Brain microvascular endothelial cell (primary cell): ENCODE measurements at regions of chr12 and their contacts with region 1.

Region 1: DNA sequence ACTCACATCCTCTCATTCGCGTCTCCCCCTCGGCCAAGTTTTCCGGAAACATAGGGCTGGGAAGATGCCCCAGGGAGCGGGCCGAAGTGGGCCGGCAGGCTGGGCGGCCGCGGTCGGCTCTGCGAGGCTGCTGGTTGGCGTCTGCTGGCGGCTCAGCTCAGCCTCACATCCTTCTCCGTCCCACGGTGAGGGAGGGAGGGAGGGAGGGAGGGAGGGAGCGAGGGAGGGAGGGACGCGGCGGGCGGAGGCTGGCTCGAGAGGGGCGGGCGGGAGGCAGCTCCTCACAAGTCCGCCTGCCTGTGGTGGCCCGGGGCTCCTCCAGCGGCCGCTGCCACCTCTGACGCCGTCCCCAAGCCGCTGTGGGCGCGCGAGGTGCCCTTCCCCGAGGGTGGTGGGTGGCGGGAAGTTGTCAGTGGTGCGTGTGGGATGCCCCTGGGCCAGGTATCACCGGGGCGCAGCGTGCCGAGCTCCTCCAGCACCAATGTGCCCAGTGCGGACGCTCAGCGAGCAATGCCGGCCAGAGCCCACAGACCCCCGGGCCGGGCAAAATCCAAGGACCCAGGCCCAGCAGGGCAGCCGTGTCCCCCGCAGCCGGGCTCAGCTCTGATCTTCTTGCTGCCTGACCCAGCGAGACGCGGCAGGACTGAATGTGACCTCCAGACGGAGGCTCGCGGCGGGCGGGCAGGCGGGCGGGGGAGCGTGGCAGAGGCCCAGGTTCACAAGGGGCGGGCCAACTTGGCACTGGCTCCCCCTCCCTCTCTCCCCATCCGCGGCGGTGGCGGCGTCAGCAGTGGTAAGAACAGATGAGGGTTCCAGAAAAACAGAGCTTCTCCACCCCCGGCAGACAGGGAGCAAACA is 94.0 kb downstream of the RFLNA start:
- DNase-seq: peak; percentile 76
- H3K4me3 ChIP-seq: peak overlapping the region; percentile 95
- H3K27ac ChIP-seq: peak overlapping the region; percentile 86
- H3K27me3 ChIP-seq: no peaks in the 10 kb centered on the region
- CTCF ChIP-seq: no peak

Region 2: GRCh38 chr12:123787466-123787865 is 601.4 kb before region 1 on chr12:
- in situ Hi-C with region 1: no loop called
- DNase-seq: no peak
- H3K4me3 ChIP-seq: no peak overlapping the region
- H3K27ac ChIP-seq: no peak overlapping the region
- H3K27me3 ChIP-seq: no peaks in the 10 kb centered on the region
- CTCF ChIP-seq: no peak

Region 3: DNA sequence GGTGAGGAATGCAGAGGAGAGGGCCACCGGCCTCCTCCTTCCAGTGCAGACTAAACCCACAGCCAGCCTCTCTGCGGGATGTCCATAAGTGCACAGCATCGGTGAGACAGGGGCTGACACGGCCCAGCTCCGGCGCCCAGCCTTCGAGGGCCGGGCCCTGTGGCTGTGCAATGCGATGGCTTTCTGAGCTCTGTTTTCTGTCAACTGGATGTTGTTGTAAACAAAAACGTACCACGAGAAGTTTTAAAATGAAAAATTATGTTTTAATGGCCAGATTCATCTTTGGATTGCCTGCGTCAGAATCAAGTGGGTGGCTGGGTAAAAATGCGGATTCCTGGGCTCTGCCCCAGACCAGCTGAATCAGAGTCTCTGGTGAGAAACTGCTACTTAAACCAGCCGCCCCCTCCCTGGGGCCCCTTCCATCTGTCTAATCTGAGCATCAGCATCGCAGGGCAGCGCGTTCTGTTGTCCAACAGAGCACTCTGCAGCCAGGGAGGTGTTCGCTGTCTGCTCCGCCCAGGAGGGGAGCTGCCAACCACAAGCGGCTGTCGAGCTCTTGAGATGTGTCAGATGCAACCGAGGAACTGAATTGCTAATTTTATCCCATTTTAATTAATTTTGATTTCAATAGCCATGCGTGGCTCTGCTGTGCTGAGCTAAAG is 39.4 kb after region 1 on chr12:
- in situ Hi-C with region 1: no loop called
- DNase-seq: peak; percentile 66
- H3K4me3 ChIP-seq: no peak overlapping the region
- H3K27ac ChIP-seq: peak overlapping the region; percentile 28
- H3K27me3 ChIP-seq: no peaks in the 10 kb centered on the region
- CTCF ChIP-seq: peak; percentile 6

Region 4: DNA sequence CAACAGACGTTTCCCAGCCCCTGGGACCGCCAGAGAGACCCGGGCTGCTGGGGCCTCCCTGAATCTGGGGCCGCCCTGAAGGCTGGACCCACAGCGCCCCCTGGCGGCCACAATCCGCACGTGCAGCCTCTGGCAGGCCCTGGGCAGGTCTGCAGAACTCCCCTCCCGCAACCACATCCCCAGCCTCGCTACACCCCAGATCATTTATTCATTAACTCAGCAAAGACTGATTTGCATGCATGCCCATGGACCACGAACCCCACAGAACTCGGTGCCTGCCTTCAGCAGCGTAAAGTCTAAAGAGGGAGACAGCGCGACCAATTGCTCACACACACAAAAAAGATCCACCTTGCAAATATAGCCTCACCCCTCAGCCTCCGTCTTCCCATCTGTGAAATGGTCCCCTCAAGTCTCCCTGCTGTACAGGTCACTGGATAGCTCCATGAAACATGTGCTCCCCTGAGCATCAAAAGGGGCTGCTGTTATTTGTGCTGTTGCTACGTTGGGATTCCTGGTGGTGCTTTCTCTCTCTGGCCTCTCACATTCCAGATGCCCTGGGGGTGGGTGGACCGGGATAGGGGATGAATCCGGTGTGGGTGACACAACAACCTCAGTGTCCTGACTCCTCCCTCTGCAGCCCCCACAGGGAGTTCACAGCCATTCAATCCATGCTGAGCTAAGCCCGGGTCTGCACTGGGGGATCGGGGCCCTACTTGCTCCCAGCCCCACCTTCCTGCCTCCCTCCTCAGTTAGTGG is 378.3 kb after region 1 on chr12:
- in situ Hi-C with region 1: loop called (anchors 25 kb)
- DNase-seq: peak; percentile 54
- H3K4me3 ChIP-seq: no peak overlapping the region
- H3K27ac ChIP-seq: no peak overlapping the region
- H3K27me3 ChIP-seq: no peaks in the 10 kb centered on the region
- CTCF ChIP-seq: peak; percentile 96

Region 5: DNA sequence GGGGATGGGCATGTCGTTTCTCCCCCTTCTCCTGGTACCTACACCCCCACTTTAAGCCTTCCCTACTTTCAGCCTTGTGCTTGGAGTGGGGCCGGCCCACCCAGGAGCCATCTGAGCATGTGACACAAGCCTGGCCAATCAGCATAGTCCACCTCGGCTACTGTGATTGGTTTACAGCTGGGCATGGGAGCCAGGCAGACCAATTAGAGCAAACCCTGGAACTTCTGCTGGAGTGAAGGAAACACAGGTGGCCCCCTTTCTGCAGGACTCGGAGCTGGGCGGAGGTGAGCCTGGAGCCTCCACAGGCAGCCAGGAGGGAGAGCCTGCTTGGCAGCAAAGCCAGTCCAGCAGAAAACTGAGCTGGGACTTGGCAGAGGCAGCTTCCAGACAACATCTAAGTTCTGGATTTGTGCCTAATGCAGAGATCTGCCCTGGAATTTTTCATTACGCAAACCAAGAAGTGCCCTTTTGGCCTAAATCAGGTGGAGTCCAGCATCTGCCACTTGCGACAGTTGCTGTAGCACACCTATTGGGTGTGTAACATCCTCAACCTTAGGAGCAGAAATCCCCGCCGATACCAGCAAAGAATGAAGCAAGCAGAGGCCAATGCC is 415.2 kb after region 1 on chr12:
- in situ Hi-C with region 1: no loop called
- DNase-seq: no peak
- H3K4me3 ChIP-seq: no peak overlapping the region
- H3K27ac ChIP-seq: no peak overlapping the region
- H3K27me3 ChIP-seq: no peaks in the 10 kb centered on the region
- CTCF ChIP-seq: no peak

Region 6: DNA sequence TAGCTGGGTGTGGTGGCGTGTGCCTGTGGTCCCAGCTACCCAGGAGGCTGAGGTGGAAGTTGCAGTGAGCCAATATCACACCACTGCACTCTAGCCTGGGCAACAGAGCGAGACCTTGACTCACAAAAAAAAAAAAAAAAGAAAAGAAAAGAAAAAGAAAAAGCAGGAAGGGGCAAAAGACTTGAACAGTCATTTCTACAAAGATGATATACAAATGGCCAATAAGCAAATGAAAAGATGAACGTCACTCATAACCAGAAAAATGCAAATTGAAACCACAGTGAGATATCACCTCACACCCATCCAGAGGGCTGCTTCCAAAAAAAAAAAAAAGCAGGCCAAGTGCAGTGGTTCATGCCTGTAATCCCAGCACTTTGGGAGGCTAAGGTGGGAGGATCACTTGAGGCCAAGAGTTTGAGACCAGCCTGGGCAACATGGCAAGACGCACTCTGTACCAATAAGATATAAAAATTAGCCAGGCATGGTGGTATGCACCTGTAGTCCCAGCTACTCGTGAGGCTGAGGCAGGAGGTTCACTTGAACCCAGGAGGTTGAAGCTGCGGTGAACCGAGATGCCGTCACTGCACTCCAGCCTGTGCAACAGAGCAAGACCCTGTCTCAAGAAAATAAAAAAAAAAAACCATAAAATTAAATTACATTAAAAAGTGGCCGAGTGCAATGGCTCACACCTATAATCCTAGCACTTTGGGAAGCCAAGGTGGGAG is 505.0 kb after region 1 on chr12:
- in situ Hi-C with region 1: no loop called
- DNase-seq: no peak
- H3K4me3 ChIP-seq: no peak overlapping the region
- H3K27ac ChIP-seq: no peak overlapping the region
- H3K27me3 ChIP-seq: no peaks in the 10 kb centered on the region
- CTCF ChIP-seq: no peak